PC-3 (cell line): ENCODE measurements at regions of chr19 and their contacts with region 1.

Region 1: GRCh38 chr19:53867225-53868090 is at the start of gene MYADM:
- DNase-seq: peak; percentile 100
- ATAC-seq: peak; percentile 51
- H3K4me3 ChIP-seq: peak within 1 kb of the TSS; percentile 87
- H3K27ac ChIP-seq: peak within 1 kb of the TSS; percentile 88
- H3K4me1 ChIP-seq: peaks cover 35% of the 10 kb centered on the region
- H3K27me3 ChIP-seq: no peaks in the 10 kb centered on the region
- CTCF ChIP-seq: no peak
- total RNA-seq, gene MYADM: 58.9 and 63.5 TPM in 2 replicates

Region 2: GRCh38 chr19:54002495-54003315 is 135.2 kb after region 1 on chr19:
- CTCF ChIA-PET with region 1: no interaction called
- POLR2A ChIA-PET with region 1: interaction called, 12 read pairs
- intact Hi-C with region 1: no loop called
- DNase-seq: peak; percentile 75
- ATAC-seq: peak; percentile 83
- H3K4me3 ChIP-seq: peak overlapping the region; percentile 23; the same call in 1 of the 2 replicates
- H3K27ac ChIP-seq: peak overlapping the region; percentile 75
- H3K4me1 ChIP-seq: peaks cover 30% of the 10 kb centered on the region
- H3K27me3 ChIP-seq: no peaks in the 10 kb centered on the region; the same call in 1 of the 2 replicates
- CTCF ChIP-seq: no peak